ENCODE measurements at regions of chr1 and their contacts with region 1.

Region 1: GRCh38 chr1:87131809-87132283 is 196.8 kb upstream of the LMO4 start:
- DNase-seq: peak; percentile 81 to 90 (median 83)
- ATAC-seq: peak; percentile 74 to 93 (median 90)
- H3K4me3 ChIP-seq: peak overlapping the region; percentile 27 to 66 (median 48)
- H3K27ac ChIP-seq: peak overlapping the region in 11 of 12 donors; percentile 5 to 88 (median 67)
- H3K4me1 ChIP-seq: peaks cover 0 to 45% (median 12%) of the 10 kb centered on the region in 12 donors
- H3K27me3 ChIP-seq: peaks cover 0 to 2% (median 0%) of the 10 kb centered on the region in 9 donors
- CTCF ChIP-seq: peak; percentile 87 to 98 (median 92)
- POLR2A ChIP-seq: no peak

Region 2: GRCh38 chr1:87279966-87280535 is 148.2 kb after region 1 on chr1:
- intact Hi-C with region 1: loop called in 5 of 10 experiments (anchors 2 to 10 kb)
- DNase-seq: no peak
- ATAC-seq: no peak
- H3K4me3 ChIP-seq: no peak overlapping the region
- H3K27ac ChIP-seq: peak overlapping the region in 11 of 12 donors; percentile 15 to 77 (median 66)
- H3K4me1 ChIP-seq: peaks cover 0 to 25% (median 2%) of the 10 kb centered on the region in 12 donors
- H3K27me3 ChIP-seq: no peaks in the 10 kb centered on the region
- CTCF ChIP-seq: peak in 3 of 12 donors; percentile 5 to 20 (median 12)
- POLR2A ChIP-seq: no peak

Region 3: GRCh38 chr1:87328272-87329050 is 196.6 kb after region 1 on chr1 and contains the start of gene LMO4:
- intact Hi-C with region 1: loop called in 4 of 10 experiments (anchors 5 to 10 kb)
- DNase-seq: peak; percentile 96 to 98 (median 98)
- ATAC-seq: peak; percentile 90 to 95 (median 94)
- H3K4me3 ChIP-seq: peak within 1 kb of the TSS; percentile 71 to 88 (median 80)
- H3K27ac ChIP-seq: peak within 1 kb of the TSS; percentile 89 to 98 (median 94)
- H3K4me1 ChIP-seq: peaks cover 0 to 33% (median 16%) of the 10 kb centered on the region in 12 donors
- H3K27me3 ChIP-seq: no peaks in the 10 kb centered on the region
- CTCF ChIP-seq: no peak
- POLR2A ChIP-seq: peak; percentile 73 to 97
- total RNA-seq, gene LMO4: 23.3 to 60.7 (median 29.6) TPM

Region 4: GRCh38 chr1:87953732-87954344 is 822.0 kb after region 1 on chr1:
- intact Hi-C with region 1: loop called in 7 of 10 experiments (anchors 5 to 10 kb)
- DNase-seq: peak in 4 of 5 donors; percentile 56 to 59 (median 58)
- ATAC-seq: peak in 3 of 4 donors; percentile 69 to 83 (median 76)
- H3K4me3 ChIP-seq: no peak overlapping the region
- H3K27ac ChIP-seq: no peak overlapping the region
- H3K4me1 ChIP-seq: peaks cover 0 to 19% (median 0%) of the 10 kb centered on the region in 12 donors
- H3K27me3 ChIP-seq: no peaks in the 10 kb centered on the region
- CTCF ChIP-seq: peak; percentile 51 to 89 (median 77)
- POLR2A ChIP-seq: no peak

Region 5: DNA sequence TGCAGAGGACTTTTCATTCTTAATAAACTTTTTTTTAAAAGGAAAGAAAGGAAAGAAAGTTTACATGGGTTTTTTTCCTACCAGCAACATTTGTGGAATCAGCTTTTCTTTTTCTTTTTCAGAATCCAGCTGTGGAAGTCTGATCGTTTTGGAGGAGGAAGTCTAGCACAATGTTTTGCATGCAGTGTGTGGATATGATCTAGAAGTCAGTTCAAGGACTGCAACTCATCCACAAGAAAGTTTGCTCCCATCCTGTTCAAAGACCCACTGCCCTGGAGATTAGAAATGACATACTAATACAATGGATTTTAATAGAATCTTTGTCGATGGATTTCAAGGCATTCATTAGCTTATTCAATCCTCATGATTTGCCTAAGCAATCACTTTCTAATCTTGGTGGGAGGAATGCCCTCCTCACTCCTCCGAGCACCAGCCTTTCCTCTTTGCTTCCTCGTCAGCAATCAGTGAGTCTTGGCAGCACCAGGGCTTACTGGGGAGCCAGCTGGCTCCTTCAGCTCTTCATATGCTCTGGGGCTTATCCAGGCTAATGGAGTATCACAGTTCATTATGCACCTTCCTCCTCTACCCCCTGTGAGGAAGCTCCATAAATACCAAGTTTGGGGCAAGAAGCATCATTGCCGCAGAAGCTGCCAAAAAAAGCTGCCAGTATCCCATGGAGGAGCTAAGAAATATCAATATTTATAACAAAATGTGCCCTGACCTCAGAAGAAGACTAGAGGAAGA is 1159.9 kb after region 1 on chr1:
- intact Hi-C with region 1: loop called in 1 of 10 experiments (anchors 10 kb)
- DNase-seq: no peak
- ATAC-seq: no peak
- H3K4me3 ChIP-seq: no peak overlapping the region
- H3K27ac ChIP-seq: no peak overlapping the region
- H3K4me1 ChIP-seq: no peaks in the 10 kb centered on the region
- H3K27me3 ChIP-seq: no peaks in the 10 kb centered on the region
- CTCF ChIP-seq: no peak
- POLR2A ChIP-seq: no peak